Cardiac septum (tissue), 1 donor: ENCODE measurements at regions of chr2 and their contacts with region 1.

Region 1: GRCh38 chr2:20642055-20642971 is 8.6 kb downstream of the HS1BP3 start:
- DNase-seq: no peak

Region 2: GRCh38 chr2:20378792-20379519 is 263.4 kb before region 1 on chr2:
- intact Hi-C with region 1: loop called (anchors 2 kb)
- DNase-seq: peak; percentile 91